Activated CD4-positive, alpha-beta memory T cell treated with anti-CD3 and anti-CD28 coated beads for 36 hours (primary cell): ENCODE measurements at regions of chr16 and their contacts with region 1.

Region 1: GRCh38 chr16:57091975-57092785 is at the start of gene CPNE2:
- DNase-seq: peak; percentile 52
- H3K4me3 Mint-ChIP-seq: peak within 1 kb of the TSS; percentile 72
- H3K27ac Mint-ChIP-seq: no peak within 1 kb of the TSS
- H3K4me1 Mint-ChIP-seq: peaks cover 9% of the 10 kb centered on the region
- H3K27me3 Mint-ChIP-seq: peaks cover 7% of the 10 kb centered on the region
- total RNA-seq, gene CPNE2: 7.3 to 8.1 TPM

Region 2: GRCh38 chr16:57128771-57129389 is 36.7 kb after region 1 on chr16:
- CTCF ChIA-PET with region 1: interaction called, 7 read pairs
- POLR2A ChIA-PET with region 1: no interaction called
- intact Hi-C with region 1: loop called (anchors 5 kb)
- DNase-seq: peak; percentile 76
- H3K4me3 Mint-ChIP-seq: peak overlapping the region; percentile 33
- H3K27ac Mint-ChIP-seq: peak overlapping the region; percentile 74
- H3K4me1 Mint-ChIP-seq: peaks cover 70% of the 10 kb centered on the region
- H3K27me3 Mint-ChIP-seq: no peaks in the 10 kb centered on the region

Region 3: GRCh38 chr16:57167953-57168352 is 75.8 kb after region 1 on chr16:
- CTCF ChIA-PET with region 1: interaction called, 5 read pairs
- POLR2A ChIA-PET with region 1: no interaction called
- intact Hi-C with region 1: loop called (anchors 1 kb)
- DNase-seq: no peak
- H3K4me3 Mint-ChIP-seq: no peak overlapping the region
- H3K27ac Mint-ChIP-seq: no peak overlapping the region
- H3K4me1 Mint-ChIP-seq: peaks cover 3% of the 10 kb centered on the region
- H3K27me3 Mint-ChIP-seq: no peaks in the 10 kb centered on the region